Posterior cingulate gyrus (tissue), 11 donors: ENCODE measurements at regions of chr1 and their contacts with region 1.

Region 1: DNA sequence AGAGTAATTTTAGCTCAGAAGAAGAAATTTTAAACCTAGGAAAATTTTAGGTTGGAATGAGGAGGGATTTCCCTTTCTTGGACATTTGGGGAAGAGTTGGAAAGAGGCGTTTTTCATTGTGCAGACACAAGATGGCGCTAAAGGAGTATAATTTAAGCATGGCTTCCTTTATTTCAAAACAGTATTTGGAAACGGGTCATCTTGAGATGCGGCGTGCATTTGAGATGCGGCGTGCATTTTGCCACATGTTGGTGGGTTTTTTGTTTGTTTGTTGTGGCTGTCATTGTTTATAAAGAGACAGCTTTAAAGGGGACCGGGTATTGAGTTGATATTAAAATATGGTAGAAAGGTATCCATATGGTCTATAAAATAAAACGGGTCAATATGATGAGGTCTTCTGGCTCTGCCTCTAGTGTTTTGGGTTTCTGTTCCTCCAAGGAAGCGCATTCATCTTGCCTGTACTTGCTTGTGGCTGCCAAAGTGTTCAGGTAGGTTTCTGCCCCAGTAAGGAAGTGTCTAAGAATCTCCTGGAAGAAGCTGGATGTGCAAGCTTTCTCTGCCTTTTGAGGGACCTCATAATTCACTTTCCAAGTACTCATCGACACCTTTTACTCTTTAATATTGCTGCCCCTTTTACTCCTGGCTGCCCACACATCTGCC is 210.3 kb downstream of the SLC35F3 start:
- DNase-seq: peak in 4 of 10 donors; percentile 16 to 33 (median 26)

Region 2: DNA sequence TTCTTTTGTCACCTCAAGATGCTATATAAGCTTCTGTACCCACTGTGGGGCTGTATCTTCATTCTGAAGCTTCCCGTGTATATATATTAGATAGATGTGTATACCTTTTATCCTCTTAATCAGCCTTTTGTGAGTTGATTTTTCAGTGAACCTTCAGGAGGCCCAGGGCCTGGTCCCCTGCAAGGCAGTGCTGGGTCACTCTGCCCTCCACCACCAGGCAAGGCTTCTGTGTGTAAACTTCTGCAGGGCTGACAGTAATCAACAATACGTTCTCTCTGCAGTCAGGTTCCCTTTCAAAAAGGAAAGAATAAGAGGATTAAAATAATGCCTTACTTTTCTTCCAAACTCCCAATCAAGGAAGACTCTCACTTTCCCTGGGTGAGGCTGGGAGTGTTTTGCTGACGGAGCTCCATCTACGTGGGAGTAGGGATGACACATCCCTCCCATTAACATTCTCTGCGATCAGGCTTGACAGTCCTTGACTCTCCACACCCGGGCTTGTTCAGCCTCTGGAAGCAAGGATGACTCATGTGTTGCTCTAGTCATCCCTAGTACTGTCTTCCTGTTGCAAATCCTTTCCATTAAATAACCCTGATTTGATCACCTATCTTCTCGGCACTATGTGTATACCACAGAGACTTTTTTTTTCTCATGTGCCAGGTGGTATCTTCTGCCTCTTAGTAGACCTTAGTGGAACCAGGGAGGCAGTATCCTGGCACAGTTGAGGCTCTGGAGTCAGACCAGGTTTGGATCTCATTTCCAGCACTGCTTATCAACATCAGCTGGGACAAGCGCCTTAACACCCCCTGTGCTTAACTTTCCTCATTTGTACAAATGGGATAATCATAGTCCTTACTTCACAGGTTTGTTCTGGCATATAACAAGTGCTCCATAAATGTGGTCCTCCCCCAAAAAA is 571.2 kb before region 1 on chr1:
- intact Hi-C with region 1: no loop called
- DNase-seq: peak in 8 of 10 donors; percentile 25 to 90 (median 50)

Region 3: DNA sequence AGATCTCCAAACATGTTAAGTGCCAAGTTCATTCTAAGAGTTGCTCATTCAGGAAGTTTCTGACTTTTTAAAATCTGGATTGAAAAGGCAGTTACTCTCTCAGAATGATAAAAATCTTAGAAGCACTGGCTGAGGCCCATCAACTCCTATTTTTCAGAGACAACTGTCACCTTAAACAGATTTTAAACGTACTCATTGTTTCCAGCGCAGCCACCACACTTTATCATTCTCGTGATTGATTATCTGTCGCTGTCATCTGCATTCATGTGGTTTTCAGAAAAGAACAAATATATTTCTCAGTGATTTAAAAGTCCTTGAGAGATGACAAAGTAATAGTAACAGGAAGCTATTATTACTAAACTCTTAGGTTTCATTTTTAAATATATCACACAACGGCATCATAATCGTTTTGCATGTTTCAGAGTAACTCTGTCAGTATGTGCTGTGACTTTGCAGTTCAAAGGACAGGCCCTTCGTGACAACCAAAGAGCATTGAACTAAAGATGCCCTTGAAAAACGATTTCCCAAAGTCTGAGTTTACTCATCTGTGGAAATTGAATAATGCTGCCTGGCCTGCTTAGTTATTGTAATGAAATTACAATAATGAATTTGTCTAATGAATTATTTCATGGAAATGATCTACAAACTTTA is 515.8 kb before region 1 on chr1:
- intact Hi-C with region 1: no loop called
- DNase-seq: no peak

Region 4: GRCh38 chr1:233982827-233983518 is 131.8 kb before region 1 on chr1:
- intact Hi-C with region 1: no loop called
- DNase-seq: no peak

Region 5: GRCh38 chr1:234302354-234302962 is 187.7 kb after region 1 on chr1:
- intact Hi-C with region 1: no loop called
- DNase-seq: no peak

Region 6: DNA sequence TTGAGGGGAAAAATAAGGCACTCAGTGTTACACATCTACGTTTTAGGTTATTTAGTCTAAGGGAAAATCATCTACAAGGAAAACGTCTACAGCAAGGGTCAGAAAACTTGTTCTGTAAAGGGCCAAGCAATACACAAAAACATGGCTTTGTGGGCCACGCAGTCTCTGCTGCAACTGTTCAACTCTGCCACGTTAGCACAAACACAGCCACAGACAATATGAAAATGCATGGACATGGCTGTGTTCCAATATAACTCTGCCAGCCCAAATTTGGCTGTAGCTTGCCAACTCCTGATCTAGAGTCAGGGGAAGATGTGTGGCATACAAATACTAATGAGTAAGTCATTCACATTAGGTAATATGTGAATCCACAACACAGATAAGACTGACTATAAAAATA is 299.2 kb after region 1 on chr1:
- intact Hi-C with region 1: loop called (anchors 5 kb)
- DNase-seq: no peak